ENCODE measurements at regions of chr11 and their contacts with region 1.

Region 1: DNA sequence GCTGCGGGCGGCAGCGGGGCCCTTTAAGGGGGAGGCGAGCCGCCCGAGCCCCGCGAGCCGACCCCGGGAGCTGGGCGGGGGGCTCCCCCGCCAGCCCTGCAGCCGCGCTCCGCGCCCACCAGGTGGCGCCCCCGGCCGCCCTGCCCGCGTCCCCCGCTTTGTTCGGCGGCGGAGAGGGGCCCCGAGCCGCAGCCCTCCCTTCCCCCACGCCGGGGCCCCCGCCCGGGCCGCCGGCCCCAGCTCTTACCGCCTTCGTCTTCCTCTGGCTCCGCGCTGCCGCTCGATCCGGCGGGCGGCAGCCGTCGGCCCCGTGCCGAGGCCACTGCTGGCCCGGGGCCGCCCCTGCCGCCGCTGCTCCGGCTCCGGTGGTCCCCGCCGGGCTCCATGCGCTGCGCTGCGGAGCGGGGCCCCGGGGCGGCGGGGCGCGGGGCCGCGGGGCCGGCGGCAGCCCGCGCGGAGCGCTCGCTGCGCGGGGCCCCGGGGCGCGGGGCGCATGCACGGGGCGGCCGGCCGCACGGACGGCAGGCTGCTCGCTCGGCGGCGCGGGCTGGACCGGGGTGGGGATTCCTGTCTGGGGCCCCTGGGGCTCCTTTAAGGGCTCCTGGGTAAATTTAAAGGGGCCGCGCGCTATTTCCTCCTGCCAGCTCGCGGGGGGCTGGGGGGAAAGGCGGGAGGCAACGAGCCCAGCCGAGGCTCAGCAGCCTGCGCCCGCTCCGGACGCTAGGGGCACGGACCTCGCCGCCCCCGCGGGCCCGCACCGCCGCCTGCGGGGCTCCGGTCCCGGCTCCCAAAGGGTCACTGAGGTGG is at the start of gene ZFTA:
- DNase-seq: peak; percentile 58 to 74 (median 61)
- H3K4me3 ChIP-seq: peak within 1 kb of the TSS; percentile 56 to 97 (median 74)
- H3K27ac ChIP-seq: peak within 1 kb of the TSS in 4 of 5 donors; percentile 8 to 80 (median 65)
- H3K4me1 ChIP-seq: peaks cover 22 to 34% of the 10 kb centered on the region in 2 donors
- H3K27me3 ChIP-seq: no peaks in the 10 kb centered on the region
- CTCF ChIP-seq: peak in 3 of 6 experiments; percentile 78 to 86 (median 81)
- POLR2A ChIP-seq: peak in 1 of 2 donors; percentile 15
- total RNA-seq, gene ZFTA: 8.1 to 20.2 (median 15.2) TPM

Region 2: DNA sequence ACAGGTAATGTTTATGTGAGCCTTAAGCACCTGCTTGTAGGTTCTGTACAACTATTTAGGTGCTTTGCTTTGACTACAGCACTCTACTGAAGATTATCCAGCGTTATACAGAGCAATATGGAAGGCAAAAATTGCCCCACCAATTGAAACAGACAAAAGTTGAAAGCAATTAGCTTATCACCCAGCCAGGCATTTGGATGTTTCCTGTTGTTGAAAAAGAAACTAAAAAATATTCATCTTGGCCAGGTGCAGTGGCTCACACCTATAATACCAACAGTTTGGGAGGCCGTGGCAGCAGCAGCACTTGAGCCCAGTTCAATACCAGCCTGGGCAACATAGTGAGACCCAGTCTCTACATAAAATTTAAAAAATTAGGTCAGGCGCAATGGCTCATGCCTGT is 115.8 kb before region 1 on chr11:
- intact Hi-C with region 1: no loop called
- DNase-seq: no peak
- H3K4me3 ChIP-seq: no peak overlapping the region
- H3K27ac ChIP-seq: no peak overlapping the region
- H3K4me1 ChIP-seq: no peaks in the 10 kb centered on the region
- H3K27me3 ChIP-seq: no peaks in the 10 kb centered on the region
- CTCF ChIP-seq: no peak
- POLR2A ChIP-seq: no peak

Region 3: DNA sequence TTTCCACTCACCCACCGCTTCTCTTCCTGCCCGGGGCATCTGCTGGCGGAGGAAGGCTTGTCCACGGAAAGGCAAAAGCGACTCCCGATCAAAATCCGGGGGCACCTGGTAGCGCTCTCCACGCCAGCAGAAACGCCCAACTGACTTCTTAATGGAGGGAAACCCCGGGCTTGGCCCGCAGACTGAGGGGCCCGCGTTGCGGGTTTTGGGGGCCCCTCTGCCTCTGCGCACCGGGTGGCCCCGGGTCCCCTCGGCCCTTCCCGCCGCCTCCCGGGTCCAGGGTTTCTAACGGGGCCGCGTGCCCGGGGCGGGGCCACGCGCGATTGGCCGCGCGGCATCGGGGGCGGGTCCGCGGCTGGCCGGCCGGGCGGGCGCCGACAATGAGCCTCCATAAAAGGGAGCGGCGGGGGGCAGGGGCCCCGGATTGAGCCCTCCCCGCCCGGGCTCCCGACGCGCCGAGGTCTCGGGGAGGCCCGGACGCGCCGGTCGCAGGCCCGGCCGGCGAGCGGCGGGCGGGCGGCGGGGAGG is 44.7 kb after region 1 on chr11 and contains the start of gene SPINDOC:
- intact Hi-C with region 1: loop called in 1 of 2 experiments (anchors 2 kb)
- DNase-seq: peak; percentile 60 to 84 (median 79)
- H3K4me3 ChIP-seq: peak within 1 kb of the TSS; percentile 54 to 88 (median 62)
- H3K27ac ChIP-seq: peak within 1 kb of the TSS in 4 of 5 donors; percentile 22 to 80 (median 48)
- H3K4me1 ChIP-seq: peaks cover 0 to 24% of the 10 kb centered on the region in 2 donors
- H3K27me3 ChIP-seq: no peaks in the 10 kb centered on the region
- CTCF ChIP-seq: no peak
- POLR2A ChIP-seq: peak; percentile 39 to 49
- total RNA-seq, gene SPINDOC: 9.3 to 18.1 (median 11.0) TPM

Region 4: GRCh38 chr11:63945477-63946163 is 177.2 kb after region 1 on chr11:
- intact Hi-C with region 1: loop called in 1 of 2 experiments (anchors 10 kb)
- DNase-seq: peak; percentile 77 to 92 (median 88)
- H3K4me3 ChIP-seq: peak overlapping the region in 1 of 4 donors; percentile 8
- H3K27ac ChIP-seq: peak overlapping the region; percentile 28 to 79 (median 74)
- H3K4me1 ChIP-seq: peaks cover 15 to 23% of the 10 kb centered on the region in 2 donors
- H3K27me3 ChIP-seq: no peaks in the 10 kb centered on the region
- CTCF ChIP-seq: peak; percentile 70 to 94 (median 86)
- POLR2A ChIP-seq: no peak

Measured in adrenal gland (tissue), 19 donors.